HepG2 (cell line): ENCODE measurements at regions of chr16 and their contacts with region 1.

Region 1: DNA sequence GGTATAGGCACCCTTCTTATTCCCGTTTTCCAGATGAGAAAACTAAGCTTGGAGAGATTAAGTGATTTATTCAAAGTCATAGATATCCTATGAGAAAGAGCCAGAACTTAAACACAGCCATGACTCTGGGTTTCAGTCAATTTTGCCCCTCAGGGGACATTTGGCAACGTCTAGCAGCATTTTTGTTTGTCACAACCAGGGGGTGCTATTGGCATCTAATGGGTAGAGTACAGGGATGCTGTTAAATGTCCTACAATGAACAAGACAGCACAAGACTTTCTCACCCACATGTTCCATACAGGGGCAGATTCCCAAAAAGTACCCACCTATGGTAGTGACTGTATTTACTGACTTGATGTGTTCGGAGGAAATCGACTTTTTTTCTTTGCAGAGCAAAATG is 4.8 kb upstream of the SHISA9 start:
- DNase-seq: peak; percentile 74
- ATAC-seq: peak; percentile 83
- H3K4me3 ChIP-seq: no peak overlapping the region
- H3K27ac ChIP-seq: no peak overlapping the region
- H3K4me1 ChIP-seq: no peaks in the 10 kb centered on the region
- H3K27me3 ChIP-seq: peaks cover 5 to 28% of the 10 kb centered on the region in 2 experiments; a peak in 4 of 5 replicates
- CTCF ChIP-seq: peak; percentile 89
- EP300 ChIP-seq: no peak
- POLR2A ChIP-seq: no peak
- RAD21 ChIP-seq: peak; percentile 79

Region 2: GRCh38 chr16:12455287-12455798 is 441.2 kb before region 1 on chr16:
- CTCF ChIA-PET with region 1: no interaction called
- POLR2A ChIA-PET with region 1: no interaction called
- in situ Hi-C with region 1: no loop called
- intact Hi-C with region 1: loop called (anchors 5 kb)
- DNase-seq: peak; percentile 53
- ATAC-seq: peak; percentile 95
- H3K4me3 ChIP-seq: no peak overlapping the region
- H3K27ac ChIP-seq: no peak overlapping the region
- H3K4me1 ChIP-seq: peaks cover 20% of the 10 kb centered on the region
- H3K27me3 ChIP-seq: no peaks in the 10 kb centered on the region
- CTCF ChIP-seq: peak; percentile 99
- EP300 ChIP-seq: no peak
- POLR2A ChIP-seq: no peak
- RAD21 ChIP-seq: peak; percentile 98

Region 3: GRCh38 chr16:13186813-13187212 is 290.3 kb after region 1 on chr16:
- CTCF ChIA-PET with region 1: no interaction called
- POLR2A ChIA-PET with region 1: no interaction called
- in situ Hi-C with region 1: no loop called
- intact Hi-C with region 1: loop called (anchors 1 kb)
- DNase-seq: peak; percentile 31
- ATAC-seq: peak; percentile 83
- H3K4me3 ChIP-seq: no peak overlapping the region
- H3K27ac ChIP-seq: no peak overlapping the region
- H3K4me1 ChIP-seq: no peaks in the 10 kb centered on the region
- H3K27me3 ChIP-seq: no peaks in the 10 kb centered on the region
- CTCF ChIP-seq: peak; percentile 62
- EP300 ChIP-seq: no peak
- POLR2A ChIP-seq: no peak
- RAD21 ChIP-seq: peak; percentile 61

Region 4: GRCh38 chr16:13436641-13437412 is 540.3 kb after region 1 on chr16:
- CTCF ChIA-PET with region 1: interaction called, 4 read pairs
- POLR2A ChIA-PET with region 1: no interaction called
- in situ Hi-C with region 1: no loop called
- intact Hi-C with region 1: loop called (anchors 5 kb)
- DNase-seq: peak; percentile 66
- ATAC-seq: peak; percentile 89
- H3K4me3 ChIP-seq: no peak overlapping the region
- H3K27ac ChIP-seq: peak overlapping the region; percentile 3
- H3K4me1 ChIP-seq: peaks cover 26% of the 10 kb centered on the region
- H3K27me3 ChIP-seq: no peaks in the 10 kb centered on the region
- CTCF ChIP-seq: no peak
- EP300 ChIP-seq: peak in 1 of 2 experiments; percentile 38; a peak in 1 of 4 replicates
- POLR2A ChIP-seq: no peak
- RAD21 ChIP-seq: no peak

Region 5: DNA sequence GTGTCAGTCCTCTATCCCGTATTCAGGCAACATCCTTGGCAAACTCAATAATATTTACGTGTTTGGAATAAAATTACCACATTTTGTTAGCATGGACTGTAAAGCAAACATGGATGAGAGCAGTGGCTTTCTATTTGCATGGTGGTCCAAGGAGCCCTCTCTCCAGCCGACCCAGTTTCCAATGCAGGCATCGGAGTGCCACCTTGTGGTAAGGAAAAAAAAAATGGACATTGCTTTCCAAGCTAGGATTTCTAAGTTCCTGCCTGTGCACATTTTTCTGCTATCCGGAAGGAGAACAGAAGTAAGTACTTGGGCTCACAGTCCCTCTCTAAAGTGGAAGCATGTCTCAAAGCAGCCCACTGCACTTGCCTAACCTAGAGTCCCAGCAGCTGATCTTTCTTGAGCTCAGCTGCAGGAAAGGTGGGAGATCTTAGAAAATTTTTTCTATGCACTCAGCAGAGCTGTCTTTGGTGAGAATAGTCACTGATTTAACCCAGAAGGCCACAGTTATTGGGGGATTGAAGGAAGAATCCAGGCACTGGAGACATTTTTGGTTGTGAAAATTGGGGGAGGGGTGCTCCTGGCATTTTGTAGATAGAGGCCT is 977.4 kb after region 1 on chr16:
- CTCF ChIA-PET with region 1: no interaction called
- POLR2A ChIA-PET with region 1: no interaction called
- in situ Hi-C with region 1: no loop called
- intact Hi-C with region 1: loop called (anchors 10 kb)
- DNase-seq: peak; percentile 60
- ATAC-seq: peak; percentile 85
- H3K4me3 ChIP-seq: no peak overlapping the region
- H3K27ac ChIP-seq: no peak overlapping the region
- H3K4me1 ChIP-seq: peaks cover 8% of the 10 kb centered on the region; the same call in 1 of the 2 replicates
- H3K27me3 ChIP-seq: no peaks in the 10 kb centered on the region; a peak in 1 of 5 replicates
- CTCF ChIP-seq: peak; percentile 86
- EP300 ChIP-seq: no peak
- POLR2A ChIP-seq: no peak
- RAD21 ChIP-seq: peak; percentile 60